GM12878 (cell line): ENCODE measurements at regions of chr11 and their contacts with region 1.

Region 1: GRCh38 chr11:86041975-86042378 is 26.9 kb downstream of the PICALM start:
- DNase-seq: peak; percentile 60
- ATAC-seq: peak; percentile 83
- H3K4me3 ChIP-seq: no peak overlapping the region
- H3K27ac ChIP-seq: no peak overlapping the region
- H3K4me1 ChIP-seq: peaks cover 42% of the 10 kb centered on the region
- H3K27me3 ChIP-seq: no peaks in the 10 kb centered on the region
- CTCF ChIP-seq: peak; percentile 77 to 89 (median 81)
- EP300 ChIP-seq: no peak
- POLR2A ChIP-seq: no peak
- RAD21 ChIP-seq: peak; percentile 97

Region 2: GRCh38 chr11:85913513-85913912 is 128.5 kb before region 1 on chr11:
- CTCF ChIA-PET with region 1: no interaction called
- POLR2A ChIA-PET with region 1: no interaction called
- RAD21 ChIA-PET with region 1: no interaction called
- SMC1A ChIA-PET with region 1: no interaction called
- in situ Hi-C with region 1: no loop called
- intact Hi-C with region 1: no loop called
- DNase-seq: no peak
- ATAC-seq: no peak
- H3K4me3 ChIP-seq: no peak overlapping the region
- H3K27ac ChIP-seq: no peak overlapping the region
- H3K4me1 ChIP-seq: no peaks in the 10 kb centered on the region
- H3K27me3 ChIP-seq: peaks cover 0 to 2% of the 10 kb centered on the region in 2 experiments; a peak in 1 of 4 replicates
- CTCF ChIP-seq: no peak
- EP300 ChIP-seq: no peak
- POLR2A ChIP-seq: no peak
- RAD21 ChIP-seq: no peak

Region 3: DNA sequence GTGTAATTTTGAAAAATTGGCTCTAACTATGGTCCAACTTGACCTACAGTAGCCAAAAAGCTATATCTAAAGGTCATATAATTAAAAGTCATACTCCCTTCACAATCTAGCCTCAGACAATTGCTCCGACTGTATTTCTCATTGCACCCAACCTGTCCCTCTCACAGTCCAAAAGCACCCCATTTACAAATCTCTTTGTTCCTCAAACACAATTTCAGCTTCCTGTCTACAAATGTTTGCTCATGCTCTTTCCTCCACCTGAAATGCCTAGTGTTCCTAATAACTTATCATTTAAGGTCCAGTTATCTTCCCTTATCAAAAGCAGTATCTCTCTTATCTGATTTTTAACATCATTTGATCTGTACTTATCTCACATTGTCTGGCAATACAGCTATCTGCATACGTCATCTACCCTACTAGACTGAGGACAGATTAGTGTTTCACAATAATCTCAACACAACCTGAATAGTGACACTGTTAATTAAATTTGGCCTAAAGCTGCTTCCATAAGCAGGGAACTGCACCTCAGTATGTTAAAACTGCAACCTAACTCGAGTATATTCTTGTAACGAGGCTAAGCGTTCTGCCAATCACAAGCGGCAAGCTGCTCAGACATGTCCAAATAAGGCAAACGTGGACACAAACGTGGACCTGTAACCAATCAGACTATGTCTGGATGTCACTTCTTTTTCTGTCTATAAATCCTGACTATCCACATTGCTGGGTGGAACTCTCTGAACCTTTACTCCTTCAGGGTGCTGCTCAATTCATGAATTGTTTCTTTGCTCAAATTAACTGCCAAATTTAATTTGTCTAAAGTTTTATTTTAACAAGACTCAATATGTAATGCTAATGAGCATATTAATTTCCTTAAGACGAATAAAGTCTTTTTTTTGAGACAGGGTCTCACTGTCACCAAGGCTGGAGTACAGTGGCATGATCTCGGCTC is 11.0 kb after region 1 on chr11:
- CTCF ChIA-PET with region 1: interaction called, 18 read pairs
- POLR2A ChIA-PET with region 1: no interaction called
- RAD21 ChIA-PET with region 1: interaction called, 5 read pairs
- SMC1A ChIA-PET with region 1: interaction called, 24 read pairs
- in situ Hi-C with region 1: no loop called
- intact Hi-C with region 1: no loop called
- DNase-seq: no peak
- ATAC-seq: no peak
- H3K4me3 ChIP-seq: no peak overlapping the region
- H3K27ac ChIP-seq: peak overlapping the region; percentile 26; the same call in 1 of the 2 replicates
- H3K4me1 ChIP-seq: peaks cover 11% of the 10 kb centered on the region
- H3K27me3 ChIP-seq: no peaks in the 10 kb centered on the region
- CTCF ChIP-seq: no peak
- EP300 ChIP-seq: no peak
- POLR2A ChIP-seq: no peak
- RAD21 ChIP-seq: no peak

Region 4: GRCh38 chr11:86116386-86116726 is 74.4 kb after region 1 on chr11:
- CTCF ChIA-PET with region 1: interaction called, 17 read pairs
- POLR2A ChIA-PET with region 1: no interaction called
- RAD21 ChIA-PET with region 1: interaction called, 24 read pairs
- SMC1A ChIA-PET with region 1: interaction called, 30 read pairs
- in situ Hi-C with region 1: no loop called
- intact Hi-C with region 1: no loop called
- DNase-seq: peak; percentile 77
- ATAC-seq: peak; percentile 94
- H3K4me3 ChIP-seq: 0 out of 2 replicates have a peak overlapping the region, but pooled peaks have one; percentile 37
- H3K27ac ChIP-seq: peak overlapping the region; percentile 90
- H3K4me1 ChIP-seq: peaks cover 18% of the 10 kb centered on the region
- H3K27me3 ChIP-seq: no peaks in the 10 kb centered on the region
- CTCF ChIP-seq: no peak
- EP300 ChIP-seq: peak; percentile 79; a peak in 2 of 4 replicates
- POLR2A ChIP-seq: no peak
- RAD21 ChIP-seq: no peak

Region 5: GRCh38 chr11:86145439-86146156 is 103.6 kb after region 1 on chr11:
- CTCF ChIA-PET with region 1: no interaction called
- POLR2A ChIA-PET with region 1: no interaction called
- RAD21 ChIA-PET with region 1: interaction called, 4 read pairs
- SMC1A ChIA-PET with region 1: interaction called, 3 read pairs
- in situ Hi-C with region 1: no loop called
- intact Hi-C with region 1: loop called (anchors 5 kb)
- DNase-seq: no peak
- ATAC-seq: peak; percentile 47
- H3K4me3 ChIP-seq: no peak overlapping the region
- H3K27ac ChIP-seq: no peak overlapping the region
- H3K4me1 ChIP-seq: no peaks in the 10 kb centered on the region
- H3K27me3 ChIP-seq: no peaks in the 10 kb centered on the region
- CTCF ChIP-seq: no peak
- EP300 ChIP-seq: no peak
- POLR2A ChIP-seq: no peak
- RAD21 ChIP-seq: no peak

Region 6: DNA sequence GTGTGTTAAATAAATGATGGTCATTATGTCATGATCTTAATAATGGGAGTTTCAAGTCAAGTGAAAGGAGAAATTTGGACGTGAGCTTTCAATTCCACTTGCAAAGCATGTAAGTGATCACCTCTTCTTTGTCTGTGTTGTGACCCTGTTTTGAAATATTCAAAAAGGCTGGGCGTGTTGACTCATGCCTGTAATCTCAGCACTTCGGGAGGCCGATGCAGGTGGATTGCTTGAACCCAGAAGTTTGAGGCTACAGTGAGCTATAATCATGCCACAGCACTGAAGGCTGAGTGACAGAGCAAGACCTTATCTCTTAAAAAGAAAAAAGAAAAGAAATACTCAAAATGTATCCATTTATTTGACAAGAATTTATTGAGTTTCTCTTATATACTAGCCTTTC is 169.6 kb after region 1 on chr11:
- CTCF ChIA-PET with region 1: interaction called, 103 read pairs
- POLR2A ChIA-PET with region 1: interaction called, 3 read pairs
- RAD21 ChIA-PET with region 1: interaction called, 27 read pairs
- SMC1A ChIA-PET with region 1: interaction called, 78 read pairs
- in situ Hi-C with region 1: no loop called
- intact Hi-C with region 1: no loop called
- DNase-seq: peak; percentile 74
- ATAC-seq: peak; percentile 69
- H3K4me3 ChIP-seq: no peak overlapping the region
- H3K27ac ChIP-seq: no peak overlapping the region
- H3K4me1 ChIP-seq: peaks cover 48% of the 10 kb centered on the region
- H3K27me3 ChIP-seq: no peaks in the 10 kb centered on the region
- CTCF ChIP-seq: no peak
- EP300 ChIP-seq: 0 out of 4 replicates have a peak, but pooled peaks of 1 of the 2 experiments have one; percentile 39
- POLR2A ChIP-seq: no peak
- RAD21 ChIP-seq: no peak

Region 7: DNA sequence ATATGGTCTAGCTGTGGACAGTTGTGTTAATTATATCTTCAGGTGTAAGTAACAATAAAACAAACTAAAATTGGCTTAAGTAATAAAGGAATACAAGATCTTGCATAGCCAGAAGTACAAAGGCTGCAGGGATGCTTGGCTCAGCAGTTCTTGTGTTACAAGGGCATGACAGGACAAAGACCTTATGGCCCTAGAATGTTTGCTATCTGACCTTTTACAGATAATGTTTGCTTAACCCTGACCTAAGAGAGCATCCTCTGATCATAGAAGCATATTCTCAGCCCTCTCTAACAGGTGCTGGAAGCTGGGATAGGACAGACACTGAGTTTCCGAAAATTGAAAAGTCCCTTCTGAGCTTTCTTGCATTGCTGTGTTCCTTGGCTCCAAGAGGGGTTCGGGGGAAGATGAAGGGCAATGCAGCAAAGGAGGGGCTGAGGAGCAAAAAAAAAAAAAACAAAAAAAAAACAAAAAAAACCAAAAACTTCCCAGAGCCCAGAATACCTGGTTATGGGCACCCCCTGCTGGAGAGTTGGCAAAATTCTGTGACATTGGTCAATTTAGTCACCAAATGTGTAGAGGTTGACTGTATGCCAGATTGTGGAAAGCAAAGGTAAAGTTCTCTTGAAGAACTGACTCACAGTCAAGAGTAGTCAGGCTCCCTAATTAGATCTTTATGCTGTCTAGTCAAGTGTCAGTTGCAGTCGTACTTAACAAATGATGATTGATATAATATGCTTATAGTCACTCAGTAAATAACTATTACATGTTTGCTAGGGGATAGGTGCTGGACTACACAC is 249.7 kb after region 1 on chr11:
- CTCF ChIA-PET with region 1: interaction called, 51 read pairs
- POLR2A ChIA-PET with region 1: no interaction called
- RAD21 ChIA-PET with region 1: interaction called, 28 read pairs
- SMC1A ChIA-PET with region 1: interaction called, 24 read pairs
- in situ Hi-C with region 1: loop called (anchors 5 kb)
- intact Hi-C with region 1: loop called (anchors 1 kb)
- DNase-seq: peak; percentile 27
- ATAC-seq: peak; percentile 48
- H3K4me3 ChIP-seq: no peak overlapping the region
- H3K27ac ChIP-seq: no peak overlapping the region; the same call in 1 of the 2 replicates
- H3K4me1 ChIP-seq: peaks cover 41% of the 10 kb centered on the region
- H3K27me3 ChIP-seq: no peaks in the 10 kb centered on the region
- CTCF ChIP-seq: peak; percentile 70 to 79 (median 71)
- EP300 ChIP-seq: no peak
- POLR2A ChIP-seq: no peak
- RAD21 ChIP-seq: peak; percentile 95